ENCODE measurements at regions of chr1 and their contacts with region 1.

Region 1: GRCh38 chr1:54547601-54548388 is at the start of gene ACOT11:
- DNase-seq: peak in 3 of 4 experiments; percentile 31 to 45 (median 45)
- ATAC-seq: peak; percentile 23
- H3K4me3 ChIP-seq: no peak within 1 kb of the TSS
- H3K27ac ChIP-seq: no peak within 1 kb of the TSS
- H3K4me1 ChIP-seq: peaks cover 11 to 27% of the 10 kb centered on the region in 2 experiments; a peak in 4 of 5 replicates
- H3K27me3 ChIP-seq: peaks cover 26 to 73% of the 10 kb centered on the region in 2 experiments; a peak in 3 of 5 replicates
- CTCF ChIP-seq: peak in 1 of 3 experiments; percentile 15; a peak in 1 of 6 replicates
- EP300 ChIP-seq: no peak
- POLR2A ChIP-seq: no peak
- RAD21 ChIP-seq: no peak
- polyA plus RNA-seq, gene ACOT11: not detected

Region 2: GRCh38 chr1:54558434-54559030 is 10.7 kb after region 1 on chr1:
- CTCF ChIA-PET with region 1: no interaction called
- POLR2A ChIA-PET with region 1: interaction called, 15 read pairs
- in situ Hi-C with region 1: no loop called
- intact Hi-C with region 1: no loop called
- DNase-seq: no peak
- ATAC-seq: peak; percentile 56
- H3K4me3 ChIP-seq: no peak overlapping the region
- H3K27ac ChIP-seq: no peak overlapping the region
- H3K4me1 ChIP-seq: no peaks in the 10 kb centered on the region; a peak in 1 of 5 replicates
- H3K27me3 ChIP-seq: peaks cover 3 to 24% of the 10 kb centered on the region in 2 experiments
- CTCF ChIP-seq: no peak
- EP300 ChIP-seq: no peak
- POLR2A ChIP-seq: no peak
- RAD21 ChIP-seq: no peak

Region 3: GRCh38 chr1:54596756-54597155 is 49.0 kb after region 1 on chr1:
- CTCF ChIA-PET with region 1: no interaction called
- POLR2A ChIA-PET with region 1: no interaction called
- in situ Hi-C with region 1: no loop called
- intact Hi-C with region 1: no loop called
- DNase-seq: no peak
- ATAC-seq: peak; percentile 14; the same call in 1 of the 3 replicates
- H3K4me3 ChIP-seq: no peak overlapping the region
- H3K27ac ChIP-seq: no peak overlapping the region
- H3K4me1 ChIP-seq: peaks cover 0 to 10% of the 10 kb centered on the region in 2 experiments; a peak in 1 of 5 replicates
- H3K27me3 ChIP-seq: peaks cover 21 to 42% of the 10 kb centered on the region in 2 experiments
- CTCF ChIP-seq: no peak
- EP300 ChIP-seq: no peak
- POLR2A ChIP-seq: no peak
- RAD21 ChIP-seq: no peak

Measured in K562 (cell line).